Left ventricle myocardium inferior (tissue), 1 donor: ENCODE measurements at regions of chr7 and their contacts with region 1.

Region 1: GRCh38 chr7:25259587-25260243 is 31.4 kb upstream of the NPVF start:
- DNase-seq: peak; percentile 41
- H3K4me3 ChIP-seq: no peak overlapping the region
- H3K27ac ChIP-seq: no peak overlapping the region
- H3K4me1 ChIP-seq: peaks cover 8% of the 10 kb centered on the region
- H3K27me3 ChIP-seq: peaks cover 10% of the 10 kb centered on the region
- CTCF ChIP-seq: peak; percentile 88

Region 2: GRCh38 chr7:25069900-25070443 is 189.7 kb before region 1 on chr7:
- intact Hi-C with region 1: no loop called
- DNase-seq: peak; percentile 19
- H3K4me3 ChIP-seq: peak overlapping the region; percentile 54
- H3K27ac ChIP-seq: no peak overlapping the region
- H3K4me1 ChIP-seq: peaks cover 4% of the 10 kb centered on the region
- H3K27me3 ChIP-seq: no peaks in the 10 kb centered on the region
- CTCF ChIP-seq: peak; percentile 93

Region 3: GRCh38 chr7:25282194-25282593 is 22.5 kb after region 1 on chr7:
- intact Hi-C with region 1: no loop called
- DNase-seq: no peak
- H3K4me3 ChIP-seq: no peak overlapping the region
- H3K27ac ChIP-seq: no peak overlapping the region
- H3K4me1 ChIP-seq: no peaks in the 10 kb centered on the region
- H3K27me3 ChIP-seq: peaks cover 12% of the 10 kb centered on the region
- CTCF ChIP-seq: no peak

Region 4: DNA sequence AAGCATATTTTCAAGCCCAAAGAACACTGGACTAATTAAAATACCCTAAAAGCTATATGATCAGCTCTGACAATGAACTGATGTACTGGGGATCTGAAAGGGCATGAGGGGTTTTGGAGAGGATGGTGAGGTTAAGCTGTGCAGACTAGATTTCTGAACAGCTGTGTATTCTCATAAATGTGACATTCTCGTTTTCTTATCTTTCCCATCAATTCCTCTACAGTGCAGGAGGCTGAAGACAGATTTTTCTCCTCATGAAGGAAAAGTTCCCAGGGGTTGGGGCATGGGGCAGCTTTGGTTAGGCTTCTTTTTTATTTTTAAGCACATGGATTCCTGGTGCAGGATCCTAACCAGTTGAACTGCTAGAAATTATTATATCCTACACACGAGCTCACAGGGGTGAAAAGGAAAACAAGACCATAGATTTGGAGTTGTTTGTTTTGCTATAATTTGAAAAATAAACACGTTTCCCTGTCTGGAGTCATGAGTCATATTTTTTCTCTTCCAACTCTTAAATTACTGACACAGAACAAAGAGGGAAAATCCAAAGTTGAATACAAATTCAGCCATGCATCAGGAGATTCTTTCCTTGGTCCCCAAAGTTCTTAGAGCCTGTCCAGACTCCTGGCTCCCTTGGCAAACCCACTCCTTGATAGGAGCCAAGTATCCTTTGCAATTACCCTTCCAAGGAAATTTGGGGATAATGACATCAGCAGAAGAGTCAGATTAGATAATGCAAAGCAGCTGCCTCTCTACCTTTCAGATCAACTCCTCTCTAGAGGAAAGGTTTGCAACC is 116.3 kb after region 1 on chr7:
- intact Hi-C with region 1: no loop called
- DNase-seq: no peak
- H3K4me3 ChIP-seq: no peak overlapping the region
- H3K27ac ChIP-seq: no peak overlapping the region
- H3K4me1 ChIP-seq: no peaks in the 10 kb centered on the region
- H3K27me3 ChIP-seq: no peaks in the 10 kb centered on the region
- CTCF ChIP-seq: no peak

Region 5: DNA sequence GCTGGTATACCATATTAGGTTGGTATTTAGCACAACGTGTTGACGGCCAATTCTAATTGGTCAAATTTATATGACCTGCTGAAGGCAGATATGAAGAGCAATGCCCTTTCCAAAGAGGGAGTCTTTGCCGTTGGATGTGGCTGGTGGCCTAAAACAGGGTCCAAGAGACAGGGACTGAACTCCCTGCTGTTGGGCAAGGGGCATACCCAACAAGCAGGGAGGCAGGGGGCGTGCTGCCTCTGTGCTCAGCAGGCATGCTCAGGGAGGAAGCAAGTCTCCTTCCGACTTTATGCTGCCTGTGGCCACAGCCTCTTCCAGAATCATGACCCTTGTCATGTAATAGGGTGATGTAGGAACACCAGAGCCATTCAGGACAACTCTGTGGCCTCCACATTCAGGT is 136.3 kb after region 1 on chr7:
- intact Hi-C with region 1: no loop called
- DNase-seq: no peak
- H3K4me3 ChIP-seq: no peak overlapping the region
- H3K27ac ChIP-seq: no peak overlapping the region
- H3K4me1 ChIP-seq: peaks cover 10% of the 10 kb centered on the region
- H3K27me3 ChIP-seq: peaks cover 44% of the 10 kb centered on the region
- CTCF ChIP-seq: no peak

Region 6: GRCh38 chr7:25565949-25566348 is 306.2 kb after region 1 on chr7:
- intact Hi-C with region 1: loop called (anchors 5 kb)
- DNase-seq: no peak
- H3K4me3 ChIP-seq: no peak overlapping the region
- H3K27ac ChIP-seq: no peak overlapping the region
- H3K4me1 ChIP-seq: peaks cover 5% of the 10 kb centered on the region
- H3K27me3 ChIP-seq: peaks cover 14% of the 10 kb centered on the region
- CTCF ChIP-seq: peak; percentile 100